PC-3 (cell line): ENCODE measurements at regions of chr12 and their contacts with region 1.

Region 1: GRCh38 chr12:107105410-107105703 is 12.0 kb upstream of the CRY1 start:
- DNase-seq: no peak
- ATAC-seq: peak; percentile 23
- H3K4me3 ChIP-seq: no peak overlapping the region
- H3K27ac ChIP-seq: no peak overlapping the region
- H3K4me1 ChIP-seq: peaks cover 7% of the 10 kb centered on the region; the same call in 1 of the 2 replicates
- H3K27me3 ChIP-seq: no peaks in the 10 kb centered on the region
- CTCF ChIP-seq: no peak

Region 2: GRCh38 chr12:107014028-107014427 is 91.3 kb before region 1 on chr12:
- CTCF ChIA-PET with region 1: interaction called, 3 read pairs
- POLR2A ChIA-PET with region 1: no interaction called
- intact Hi-C with region 1: loop called (anchors 1 kb)
- DNase-seq: peak; percentile 92
- ATAC-seq: peak; percentile 100
- H3K4me3 ChIP-seq: no peak overlapping the region
- H3K27ac ChIP-seq: no peak overlapping the region
- H3K4me1 ChIP-seq: no peaks in the 10 kb centered on the region
- H3K27me3 ChIP-seq: no peaks in the 10 kb centered on the region
- CTCF ChIP-seq: peak; percentile 81

Region 3: GRCh38 chr12:107079172-107080011 is 26.0 kb before region 1 on chr12:
- CTCF ChIA-PET with region 1: no interaction called
- POLR2A ChIA-PET with region 1: no interaction called
- intact Hi-C with region 1: loop called (anchors 1 kb)
- DNase-seq: peak; percentile 84
- ATAC-seq: peak; percentile 82
- H3K4me3 ChIP-seq: no peak overlapping the region
- H3K27ac ChIP-seq: no peak overlapping the region
- H3K4me1 ChIP-seq: peaks cover 12% of the 10 kb centered on the region
- H3K27me3 ChIP-seq: no peaks in the 10 kb centered on the region
- CTCF ChIP-seq: peak; percentile 83

Region 4: GRCh38 chr12:107818984-107819383 is 713.6 kb after region 1 on chr12:
- CTCF ChIA-PET with region 1: no interaction called
- POLR2A ChIA-PET with region 1: no interaction called
- intact Hi-C with region 1: no loop called
- DNase-seq: peak; percentile 37
- ATAC-seq: peak; percentile 38
- H3K4me3 ChIP-seq: no peak overlapping the region
- H3K27ac ChIP-seq: no peak overlapping the region
- H3K4me1 ChIP-seq: no peaks in the 10 kb centered on the region
- H3K27me3 ChIP-seq: peaks cover 36% of the 10 kb centered on the region
- CTCF ChIP-seq: no peak